Left cardiac atrium (tissue), 4 donors: ENCODE measurements at regions of chr11 and their contacts with region 1.

Region 1: DNA sequence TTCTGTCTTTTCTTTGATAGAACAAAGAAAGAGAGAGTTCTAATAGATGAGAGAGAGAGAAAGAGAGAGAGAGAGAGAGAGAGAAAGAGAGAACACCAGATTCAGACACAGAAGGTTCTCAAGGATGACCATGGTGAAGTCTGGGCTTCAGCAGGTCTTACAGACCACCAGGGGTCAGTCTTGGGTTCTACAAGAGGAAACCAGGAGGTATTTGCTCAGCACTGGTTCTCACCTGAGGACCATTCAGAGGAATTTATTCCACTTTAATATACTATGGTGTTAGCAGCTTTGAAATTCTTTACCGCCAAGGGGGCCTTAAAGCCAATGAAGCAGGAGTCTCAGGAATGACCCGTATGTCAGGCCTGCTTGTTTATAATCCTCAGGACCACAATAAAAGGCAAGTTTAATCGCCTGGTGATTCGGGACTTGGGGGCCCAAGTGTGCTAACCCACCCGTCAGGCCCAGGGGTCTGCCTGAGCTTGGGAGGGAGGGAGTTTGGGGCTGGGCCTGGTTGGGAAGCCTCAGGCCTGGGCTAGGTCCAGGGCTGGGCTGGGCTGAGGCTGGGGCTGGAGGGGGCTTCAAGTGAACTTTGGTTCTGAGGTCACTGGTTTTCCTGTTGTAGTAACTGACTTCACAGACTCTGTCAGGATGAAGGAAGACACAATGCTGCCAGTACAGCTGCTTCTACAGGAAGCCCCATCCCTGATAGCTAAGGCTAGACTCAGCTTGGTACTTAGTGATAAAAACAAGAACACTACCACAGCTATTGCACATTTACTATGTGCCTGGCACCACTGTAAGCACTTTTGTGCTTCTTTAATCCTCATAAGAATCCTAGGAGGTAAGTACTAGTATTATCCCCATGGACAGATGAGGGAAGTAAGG is 179.2 kb upstream of the ZBED5 start:
- DNase-seq: no peak
- ATAC-seq: peak; percentile 78 to 80

Region 2: GRCh38 chr11:10857709-10858438 is 179.2 kb before region 1 on chr11 and contains the start of gene ZBED5:
- intact Hi-C with region 1: no loop called
- DNase-seq: peak; percentile 98
- ATAC-seq: peak; percentile 97 to 98
- total RNA-seq, gene ZBED5: 36.6 to 39.9 TPM

Region 3: GRCh38 chr11:11157185-11157584 is 120.1 kb after region 1 on chr11:
- intact Hi-C with region 1: loop called in 1 of 2 experiments (anchors 5 kb)
- DNase-seq: peak; percentile 41
- ATAC-seq: peak in 1 of 2 donors; percentile 70

Region 4: DNA sequence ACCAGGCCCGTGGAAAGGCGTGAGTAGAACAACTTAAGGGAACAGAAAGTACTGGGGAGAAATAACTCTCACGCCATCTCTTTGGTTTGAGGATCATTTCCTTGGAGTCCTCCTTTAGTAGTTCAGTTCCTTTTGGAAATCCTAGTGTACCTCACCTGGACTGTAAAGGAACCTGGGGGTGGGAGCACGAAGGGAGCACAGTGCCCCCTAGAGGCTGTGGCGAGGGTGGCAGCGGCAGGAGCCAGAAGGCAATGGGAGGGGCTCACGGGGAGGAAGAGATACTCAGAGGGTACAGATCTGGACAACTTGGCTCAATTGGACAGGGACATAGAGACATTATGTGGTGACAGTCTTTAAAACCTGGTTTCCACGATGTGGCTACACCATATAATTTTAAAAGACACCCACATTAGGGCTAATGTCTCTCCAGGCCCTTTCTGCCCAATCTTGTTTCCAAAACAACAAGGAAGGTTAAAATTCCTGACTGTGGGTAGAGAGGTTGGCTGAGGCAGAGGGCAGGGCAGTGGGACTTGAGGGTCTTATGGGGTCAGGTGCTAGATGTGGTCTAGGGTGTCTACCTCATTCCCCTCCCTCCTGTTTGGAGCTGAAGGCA is 229.0 kb after region 1 on chr11:
- intact Hi-C with region 1: loop called in 1 of 2 experiments (anchors 2 kb)
- DNase-seq: peak; percentile 49
- ATAC-seq: peak; percentile 45 to 65

Region 5: DNA sequence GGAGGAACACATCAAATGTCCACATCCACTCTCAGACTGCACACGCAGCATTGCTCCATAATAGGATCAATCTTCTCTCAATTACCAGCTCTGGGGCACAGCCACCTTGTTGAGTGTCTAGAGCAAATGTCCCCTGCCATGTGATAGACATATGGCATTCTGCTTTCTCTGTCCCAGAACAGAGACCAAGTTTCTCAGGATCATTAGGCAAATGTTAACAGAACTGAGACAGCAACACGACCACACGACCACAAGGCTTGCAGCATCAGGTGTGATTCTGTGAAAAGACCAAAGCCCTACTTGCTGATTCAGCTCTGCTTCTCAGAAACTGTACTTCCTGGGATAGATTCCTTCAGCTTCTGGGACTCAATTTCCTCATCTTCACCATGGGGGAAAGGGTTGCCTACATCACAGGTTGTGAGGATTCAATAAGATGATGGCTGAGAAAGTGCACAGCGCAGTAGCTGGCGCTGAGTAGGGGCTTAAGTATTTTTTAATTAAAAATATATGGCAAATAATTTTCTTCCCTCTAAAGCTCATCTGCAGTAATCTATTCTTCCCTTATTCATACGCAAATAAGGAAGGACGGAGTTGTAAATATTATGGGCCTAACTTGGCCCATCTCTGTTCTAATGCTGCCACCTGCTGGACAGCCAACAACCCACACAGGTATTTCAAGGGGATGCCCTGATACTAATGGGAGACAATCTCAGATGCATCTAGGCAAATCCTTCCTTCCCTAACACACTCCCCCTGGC is 750.4 kb after region 1 on chr11:
- intact Hi-C with region 1: loop called (anchors 2 to 5 kb)
- DNase-seq: peak; percentile 71
- ATAC-seq: peak; percentile 93